ENCODE measurements at regions of chr15 and their contacts with region 1.

Region 1: DNA sequence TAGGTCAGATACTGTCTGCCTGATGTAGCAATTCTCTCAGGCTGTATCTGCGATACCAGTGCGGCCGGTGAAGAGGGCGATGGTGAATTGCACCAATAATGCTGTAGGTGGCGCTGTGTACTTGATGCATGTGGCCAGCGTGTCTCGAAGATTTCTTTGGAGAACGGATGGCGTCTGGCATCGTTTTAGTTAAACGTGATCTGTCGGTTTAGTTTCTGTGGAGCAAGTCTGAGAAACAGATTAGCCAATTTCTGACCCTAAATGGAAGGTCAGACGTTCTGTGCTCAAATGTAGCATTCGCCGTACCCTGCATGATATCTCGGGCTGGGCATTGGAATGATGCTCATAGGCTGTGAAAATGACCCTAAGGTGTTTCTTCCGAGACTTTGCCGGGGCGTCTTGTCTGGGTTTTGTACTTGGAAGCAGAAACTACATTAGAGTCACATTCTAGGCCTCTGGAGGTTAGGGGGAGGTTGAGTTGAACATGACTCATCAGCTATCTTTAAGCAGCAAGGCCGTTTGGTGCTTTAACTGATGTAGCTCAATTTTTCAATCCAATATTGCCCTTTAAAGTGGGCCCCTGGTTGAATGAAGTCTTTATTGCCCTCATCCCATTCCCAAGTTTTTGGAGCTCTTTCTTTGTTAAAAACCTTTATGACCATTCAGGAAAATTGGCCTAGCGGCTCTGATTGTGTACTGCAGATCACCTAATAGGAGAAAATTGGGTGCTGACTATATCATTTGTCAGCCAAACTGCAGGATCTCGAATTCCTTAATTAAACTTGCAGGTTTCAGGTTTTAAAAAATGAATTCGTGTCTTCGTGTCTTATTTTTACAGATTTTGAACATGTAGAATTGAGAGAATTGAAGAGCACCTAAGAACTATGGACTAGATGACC is 80.0 kb downstream of the SQOR start:
- DNase-seq: peak; percentile 56
- H3K4me3 ChIP-seq: no peak overlapping the region
- H3K27ac ChIP-seq: no peak overlapping the region
- H3K4me1 ChIP-seq: peaks cover 0 to 3% of the 10 kb centered on the region in 2 experiments; a peak in 2 of 4 replicates
- H3K27me3 ChIP-seq: no peaks in the 10 kb centered on the region
- CTCF ChIP-seq: peak; percentile 83
- EP300 ChIP-seq: no peak
- RAD21 ChIP-seq: peak; percentile 90

Region 2: DNA sequence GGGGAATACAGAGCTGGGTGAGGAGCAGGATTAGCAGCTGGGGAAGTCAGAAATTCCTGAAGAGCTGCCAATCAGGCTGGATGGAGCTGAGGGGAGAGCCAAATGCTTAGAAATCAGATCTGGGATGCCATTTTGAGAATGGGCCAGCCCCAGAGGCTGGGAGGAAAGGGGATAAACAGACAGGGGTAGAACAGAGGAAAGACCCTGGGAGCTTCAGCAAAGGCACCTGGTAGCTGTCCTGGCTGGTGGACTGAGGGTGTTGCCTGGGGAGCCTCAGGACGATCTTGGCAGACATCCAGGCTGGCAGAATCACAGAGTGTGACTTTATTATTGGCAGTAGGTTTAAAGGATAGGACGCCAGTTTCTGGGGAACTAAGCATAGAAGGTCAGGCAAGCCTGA is 17.8 kb after region 1 on chr15:
- CTCF ChIA-PET with region 1: interaction called, 82 read pairs
- POLR2A ChIA-PET with region 1: no interaction called
- DNase-seq: peak; percentile 34
- H3K4me3 ChIP-seq: no peak overlapping the region
- H3K27ac ChIP-seq: no peak overlapping the region; a peak in 1 of 4 replicates
- H3K4me1 ChIP-seq: peaks cover 0 to 20% of the 10 kb centered on the region in 2 experiments; a peak in 2 of 4 replicates
- H3K27me3 ChIP-seq: 0 out of 2 replicates have a peak, but pooled peaks cover 8% of the 10 kb centered on the region
- CTCF ChIP-seq: no peak
- EP300 ChIP-seq: no peak
- RAD21 ChIP-seq: no peak

Region 3: GRCh38 chr15:45759936-45760335 is 45.1 kb after region 1 on chr15:
- CTCF ChIA-PET with region 1: no interaction called
- POLR2A ChIA-PET with region 1: no interaction called
- DNase-seq: no peak
- H3K4me3 ChIP-seq: no peak overlapping the region
- H3K27ac ChIP-seq: no peak overlapping the region
- H3K4me1 ChIP-seq: no peaks in the 10 kb centered on the region
- H3K27me3 ChIP-seq: no peaks in the 10 kb centered on the region
- CTCF ChIP-seq: no peak
- EP300 ChIP-seq: no peak
- RAD21 ChIP-seq: no peak